ENCODE measurements at regions of chr2 and their contacts with region 1.

Region 1: GRCh38 chr2:173027181-173028128 is 48.2 kb upstream of the MAP3K20 start:
- DNase-seq: peak; percentile 73
- H3K4me3 ChIP-seq: no peak overlapping the region
- H3K27ac ChIP-seq: peak overlapping the region; percentile 27
- H3K4me1 ChIP-seq: peaks cover 20% of the 10 kb centered on the region
- H3K27me3 ChIP-seq: no peaks in the 10 kb centered on the region
- CTCF ChIP-seq: peak; percentile 93

Region 2: DNA sequence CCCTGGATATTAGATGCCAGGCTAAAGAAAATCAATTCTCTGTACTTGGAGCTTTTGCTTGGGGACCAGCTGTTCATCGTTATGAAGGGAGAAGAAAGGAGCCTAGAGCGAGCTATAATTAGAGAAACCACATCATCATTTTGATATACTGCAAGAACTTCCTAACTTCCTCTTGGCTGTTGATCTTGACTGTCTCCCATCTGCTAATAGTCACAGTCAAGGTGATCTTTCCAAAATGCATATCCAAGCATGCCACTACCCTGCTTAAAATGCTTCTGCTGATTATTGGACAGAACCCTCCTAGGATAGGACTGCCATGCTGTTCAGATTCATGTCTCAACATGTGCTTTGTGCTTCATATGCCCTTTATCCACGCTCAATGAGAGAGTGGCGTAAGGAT is 237.1 kb before region 1 on chr2:
- CTCF ChIA-PET with region 1: no interaction called
- dilution Hi-C with region 1: no loop called
- in situ Hi-C with region 1: no loop called
- intact Hi-C with region 1: no loop called
- DNase-seq: no peak
- H3K4me3 ChIP-seq: no peak overlapping the region
- H3K27ac ChIP-seq: no peak overlapping the region
- H3K4me1 ChIP-seq: peaks cover 7% of the 10 kb centered on the region
- H3K27me3 ChIP-seq: no peaks in the 10 kb centered on the region
- CTCF ChIP-seq: no peak

Region 3: DNA sequence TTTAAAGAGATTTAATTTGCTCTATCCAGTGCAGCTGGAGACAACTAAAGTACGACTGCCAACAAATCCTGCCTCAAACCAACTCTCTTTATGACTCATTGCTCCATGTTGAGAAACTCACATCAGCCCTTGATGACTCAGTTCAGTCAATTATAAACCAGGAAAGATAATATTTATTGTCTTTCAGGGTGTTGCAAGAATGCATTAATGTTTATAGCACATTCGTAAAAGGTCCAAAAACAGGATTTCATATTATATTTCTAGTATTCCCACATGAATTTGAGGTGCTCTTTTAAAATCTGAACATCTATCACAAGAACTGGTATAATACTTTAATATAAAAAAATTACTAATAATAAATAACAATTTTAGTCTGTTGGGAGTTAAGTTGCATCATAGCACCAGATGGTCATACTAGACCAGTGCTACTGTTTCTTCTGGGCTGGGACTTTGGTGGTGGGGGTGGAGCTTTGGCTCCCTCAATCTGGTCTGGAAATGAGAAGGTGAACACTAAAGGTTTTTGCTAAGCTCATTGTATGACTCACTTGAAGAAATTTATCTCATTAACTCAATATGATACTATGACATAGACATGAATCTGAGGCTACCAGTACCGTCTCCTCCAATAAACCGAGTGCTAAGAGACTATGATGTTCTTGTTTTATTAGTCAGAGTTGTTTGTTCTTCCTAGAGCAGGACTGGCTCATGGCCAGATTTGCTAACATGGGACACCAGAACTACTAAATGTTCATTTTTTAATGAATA is 21.6 kb after region 1 on chr2:
- CTCF ChIA-PET with region 1: interaction called, 3 read pairs
- dilution Hi-C with region 1: no loop called
- in situ Hi-C with region 1: no loop called
- intact Hi-C with region 1: loop called (anchors 1 kb)
- DNase-seq: peak; percentile 99
- H3K4me3 ChIP-seq: no peak overlapping the region
- H3K27ac ChIP-seq: peak overlapping the region; percentile 100
- H3K4me1 ChIP-seq: peaks cover 35% of the 10 kb centered on the region
- H3K27me3 ChIP-seq: no peaks in the 10 kb centered on the region
- CTCF ChIP-seq: no peak

Region 4: GRCh38 chr2:173124441-173124840 is 97.0 kb after region 1 on chr2:
- CTCF ChIA-PET with region 1: interaction called, 5 read pairs
- dilution Hi-C with region 1: no loop called
- in situ Hi-C with region 1: no loop called
- intact Hi-C with region 1: loop called (anchors 1 kb)
- DNase-seq: peak; percentile 94
- H3K4me3 ChIP-seq: no peak overlapping the region
- H3K27ac ChIP-seq: peak overlapping the region; percentile 37
- H3K4me1 ChIP-seq: peaks cover 37% of the 10 kb centered on the region
- H3K27me3 ChIP-seq: no peaks in the 10 kb centered on the region
- CTCF ChIP-seq: peak in 1 of 2 donors; percentile 36

Region 5: DNA sequence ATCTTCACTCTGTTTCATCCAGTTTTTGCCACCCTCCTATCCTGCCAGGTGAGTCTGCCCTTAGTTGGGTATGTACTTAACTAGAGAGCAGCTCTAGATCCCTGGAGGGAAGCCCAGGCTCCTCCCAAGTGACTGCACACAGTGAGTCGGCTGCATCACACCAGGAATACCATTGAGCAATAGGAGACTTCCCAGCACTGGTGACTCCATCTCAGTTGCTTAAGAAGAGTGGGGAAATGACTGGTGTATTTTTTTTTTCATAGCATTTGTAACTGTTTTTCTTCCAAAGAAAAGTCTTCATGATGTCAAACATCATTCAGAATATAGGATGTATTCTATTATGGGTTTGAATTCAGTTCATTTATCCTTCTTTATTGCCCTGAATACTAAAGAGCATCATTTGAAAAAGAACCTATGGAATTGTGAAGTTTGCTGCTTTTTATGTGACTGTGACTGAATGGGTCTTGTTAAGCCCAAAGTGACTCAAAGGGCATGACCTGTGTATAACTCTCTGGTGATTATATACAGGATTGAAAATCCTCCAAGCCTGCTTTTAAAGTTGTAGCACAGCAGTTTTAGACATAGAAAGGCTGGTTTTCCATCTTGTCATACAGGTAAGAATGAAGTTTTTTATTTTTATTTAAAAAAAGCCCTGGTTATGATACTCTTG is 132.5 kb after region 1 on chr2:
- CTCF ChIA-PET with region 1: interaction called, 3 read pairs
- dilution Hi-C with region 1: no loop called
- in situ Hi-C with region 1: no loop called
- intact Hi-C with region 1: loop called (anchors 1 kb)
- DNase-seq: peak; percentile 99
- H3K4me3 ChIP-seq: no peak overlapping the region
- H3K27ac ChIP-seq: peak overlapping the region; percentile 82
- H3K4me1 ChIP-seq: peaks cover 32% of the 10 kb centered on the region
- H3K27me3 ChIP-seq: no peaks in the 10 kb centered on the region
- CTCF ChIP-seq: no peak

Region 6: GRCh38 chr2:173354601-173355131 is 327.2 kb after region 1 on chr2 and contains the start of gene CDCA7:
- CTCF ChIA-PET with region 1: no interaction called
- dilution Hi-C with region 1: no loop called
- in situ Hi-C with region 1: no loop called
- intact Hi-C with region 1: loop called (anchors 2 kb)
- DNase-seq: peak; percentile 62
- H3K4me3 ChIP-seq: peak within 1 kb of the TSS; percentile 65 to 86 (median 84)
- H3K27ac ChIP-seq: peak within 1 kb of the TSS; percentile 81
- H3K4me1 ChIP-seq: peaks cover 17% of the 10 kb centered on the region
- H3K27me3 ChIP-seq: no peaks in the 10 kb centered on the region
- CTCF ChIP-seq: peak in 1 of 2 donors; percentile 22
- total RNA-seq, gene CDCA7: 2.5 to 20.0 TPM